Prostate gland (tissue), 2 donors: ENCODE measurements at regions of chr20 and their contacts with region 1.

Region 1: DNA sequence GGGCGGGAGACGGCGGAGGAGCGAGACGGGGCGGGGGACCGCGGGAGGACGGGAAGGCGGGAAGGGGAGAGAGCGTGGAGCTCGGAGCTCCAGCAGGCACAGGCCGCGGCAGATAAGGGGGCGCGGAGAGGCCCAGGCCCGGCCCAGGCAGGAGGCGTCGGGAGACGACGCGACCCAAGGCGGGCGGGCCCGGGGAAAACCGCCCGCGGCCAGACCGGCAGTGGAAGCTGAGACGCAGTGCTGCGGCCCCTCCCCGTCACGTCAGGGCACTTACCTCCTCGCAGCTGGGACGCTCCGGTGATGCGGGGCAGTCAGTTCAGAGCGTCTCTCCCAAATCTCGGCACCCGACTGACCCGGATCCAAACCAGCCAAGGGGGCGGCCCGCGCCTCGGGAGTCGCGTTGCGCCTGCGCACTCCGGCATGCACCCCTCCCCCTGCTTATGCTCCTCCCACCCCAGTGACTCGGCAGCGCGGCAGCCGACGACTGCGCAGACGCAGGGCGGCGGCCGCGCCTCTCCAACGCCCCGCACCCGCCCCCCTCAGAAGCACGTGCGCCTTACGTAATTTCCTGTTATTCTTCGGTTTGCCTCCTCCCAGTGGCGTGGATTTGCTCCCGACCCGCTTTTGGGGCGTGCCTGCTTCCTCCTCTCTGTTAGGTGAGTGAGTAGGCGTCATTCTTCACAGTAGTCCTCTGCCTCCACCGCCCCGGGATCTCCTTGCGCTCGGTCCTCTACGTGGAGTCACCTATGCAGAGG is at the start of gene OSER1:
- DNase-seq: peak; percentile 99
- H3K4me3 ChIP-seq: peak within 1 kb of the TSS; percentile 81 to 90
- H3K27ac ChIP-seq: peak within 1 kb of the TSS; percentile 97
- H3K4me1 ChIP-seq: no peaks in the 10 kb centered on the region
- H3K27me3 ChIP-seq: no peaks in the 10 kb centered on the region
- CTCF ChIP-seq: peak in 2 of 4 experiments; percentile 24 to 32
- POLR2A ChIP-seq: peak; percentile 93
- total RNA-seq, gene OSER1: 31.6 to 42.7 TPM

Region 2: DNA sequence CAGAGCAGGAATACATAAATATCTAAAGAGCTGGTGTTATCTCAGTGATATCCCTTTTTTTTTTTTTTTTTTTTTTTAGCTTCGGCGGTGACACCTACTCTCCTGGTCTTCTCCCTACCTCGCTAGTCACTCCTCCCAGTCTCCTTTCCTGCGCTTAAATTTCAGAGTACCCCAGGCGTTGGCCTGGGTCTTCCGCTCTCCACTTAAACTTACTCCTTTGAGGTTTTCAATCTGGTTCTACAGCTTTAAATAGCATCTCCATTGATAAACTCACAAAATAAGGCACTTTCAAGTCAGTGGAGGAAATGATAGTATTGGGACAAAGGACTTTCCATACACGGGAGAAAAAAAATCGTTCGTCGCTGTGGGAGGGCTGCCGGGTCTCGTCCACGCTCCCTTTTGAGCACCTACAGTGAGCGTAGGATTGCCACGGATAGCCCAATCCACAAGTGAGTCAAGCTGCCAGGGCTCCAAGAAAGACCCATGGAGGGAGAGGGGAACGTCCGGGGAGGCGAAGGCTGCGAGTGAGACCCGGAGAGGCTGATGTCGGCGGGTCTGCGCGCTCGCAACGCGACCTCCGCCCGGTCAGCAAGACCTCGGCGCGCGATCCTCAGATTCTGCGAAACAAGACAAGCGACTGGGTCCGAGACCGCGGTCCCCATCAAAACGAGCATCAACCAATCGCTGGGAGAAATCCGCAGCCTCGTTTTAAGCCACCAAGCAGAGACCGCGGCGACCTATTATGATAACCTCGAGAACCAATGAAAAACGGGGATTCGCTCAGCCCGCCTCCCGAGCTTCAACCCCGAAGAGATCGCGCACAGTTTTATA is 753.6 kb before region 1 on chr20:
- intact Hi-C with region 1: loop called (anchors 5 kb)
- DNase-seq: peak; percentile 95
- H3K4me3 ChIP-seq: peak overlapping the region; percentile 65 to 93
- H3K27ac ChIP-seq: peak overlapping the region; percentile 98 to 100
- H3K4me1 ChIP-seq: no peaks in the 10 kb centered on the region
- H3K27me3 ChIP-seq: no peaks in the 10 kb centered on the region
- CTCF ChIP-seq: no peak
- POLR2A ChIP-seq: no peak

Region 3: DNA sequence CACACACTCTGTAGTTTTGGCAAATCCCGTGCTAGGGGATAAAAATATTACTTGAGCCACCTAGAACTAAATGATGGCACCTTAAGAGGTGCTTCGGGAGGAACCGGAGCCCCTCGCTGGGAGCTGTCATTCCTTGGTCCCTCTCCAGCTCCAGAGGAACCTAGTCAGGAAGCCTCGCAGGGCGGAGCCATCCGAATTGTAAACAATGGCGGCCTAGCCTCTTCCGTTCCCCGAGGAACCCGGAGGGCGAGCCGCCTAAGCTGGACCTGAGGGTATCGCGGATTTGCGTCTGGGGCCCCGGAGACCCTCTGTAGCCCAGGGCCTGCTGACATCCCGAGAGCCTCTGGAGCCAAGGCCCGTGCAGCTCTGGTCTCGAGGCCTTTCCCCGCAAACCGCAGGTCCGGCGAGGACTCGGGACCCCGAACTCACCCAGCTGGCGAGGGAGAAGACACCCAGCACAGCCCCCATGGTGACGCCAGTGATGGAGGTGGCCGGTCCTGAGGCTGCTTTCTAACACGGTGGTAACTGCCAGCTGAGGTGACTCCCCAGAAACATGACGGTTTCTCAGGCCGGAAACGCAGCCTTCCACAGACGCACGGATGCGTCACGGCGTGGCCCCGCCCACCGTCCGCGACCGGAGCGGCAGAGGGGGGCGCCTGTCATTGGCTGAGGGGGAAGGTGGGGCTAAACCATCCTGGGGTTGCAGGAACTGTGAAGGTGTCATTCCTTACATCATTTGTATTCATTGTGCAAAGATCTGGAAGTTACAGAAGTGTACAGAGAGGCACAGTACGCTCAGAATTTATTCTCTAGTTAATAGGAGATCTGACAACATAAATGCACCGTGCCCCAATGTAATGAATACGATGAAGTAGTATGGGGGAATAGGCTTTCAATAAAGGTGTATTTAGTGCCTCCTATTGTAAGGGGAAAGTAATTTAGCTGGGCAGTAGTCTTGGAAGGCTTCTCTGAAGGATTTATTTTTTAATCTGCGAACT is 311.2 kb after region 1 on chr20 and contains the start of gene SERINC3:
- intact Hi-C with region 1: loop called (anchors 10 kb)
- DNase-seq: peak; percentile 95
- H3K4me3 ChIP-seq: peak within 1 kb of the TSS; percentile 81 to 100
- H3K27ac ChIP-seq: peak within 1 kb of the TSS; percentile 97 to 100
- H3K4me1 ChIP-seq: peaks cover 8% of the 10 kb centered on the region
- H3K27me3 ChIP-seq: no peaks in the 10 kb centered on the region
- CTCF ChIP-seq: no peak
- POLR2A ChIP-seq: peak; percentile 91
- total RNA-seq, gene SERINC3: 89.1 to 141 TPM

Region 4: GRCh38 chr20:44733341-44734069 is 522.9 kb after region 1 on chr20:
- intact Hi-C with region 1: loop called (anchors 10 kb)
- DNase-seq: peak; percentile 70
- H3K4me3 ChIP-seq: no peak overlapping the region
- H3K27ac ChIP-seq: no peak overlapping the region
- H3K4me1 ChIP-seq: peaks cover 3% of the 10 kb centered on the region
- H3K27me3 ChIP-seq: no peaks in the 10 kb centered on the region
- CTCF ChIP-seq: peak; percentile 84 to 96 (median 94)
- POLR2A ChIP-seq: no peak